GM12878 (cell line): ENCODE measurements at regions of chr14 and their contacts with region 1.

Region 1: GRCh38 chr14:19947413-19948090 is 16.8 kb downstream of the OR4K1 start:
- DNase-seq: no peak
- ATAC-seq: no peak
- H3K4me3 ChIP-seq: no peak overlapping the region
- H3K27ac ChIP-seq: no peak overlapping the region
- H3K4me1 ChIP-seq: no peaks in the 10 kb centered on the region
- H3K27me3 ChIP-seq: no peaks in the 10 kb centered on the region
- CTCF ChIP-seq: no peak
- EP300 ChIP-seq: no peak
- POLR2A ChIP-seq: no peak
- RAD21 ChIP-seq: no peak

Region 2: DNA sequence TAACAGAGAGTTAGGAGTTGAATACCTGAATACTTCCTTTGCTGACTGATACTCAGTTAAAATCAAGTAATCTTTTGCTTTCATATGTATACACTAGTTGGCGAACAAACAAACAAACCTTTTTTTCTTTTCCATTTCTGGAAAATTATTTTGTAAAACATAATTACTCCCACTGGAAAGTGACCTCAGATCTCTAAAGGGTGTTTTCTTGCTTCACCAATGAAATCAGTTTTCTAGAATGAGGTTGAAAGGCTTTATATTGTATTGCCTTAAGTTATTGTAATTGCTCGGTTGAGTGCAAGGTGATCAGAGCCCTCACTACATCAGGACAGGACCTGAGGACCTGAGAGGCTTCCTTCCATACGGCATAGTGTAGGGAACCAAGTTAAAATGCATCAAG is 16.9 kb before region 1 on chr14 and contains the start of gene OR4K1:
- CTCF ChIA-PET with region 1: no interaction called
- POLR2A ChIA-PET with region 1: no interaction called
- RAD21 ChIA-PET with region 1: no interaction called
- SMC1A ChIA-PET with region 1: no interaction called
- in situ Hi-C with region 1: no loop called
- intact Hi-C with region 1: no loop called
- DNase-seq: no peak
- ATAC-seq: no peak
- H3K4me3 ChIP-seq: no peak within 1 kb of the TSS
- H3K27ac ChIP-seq: no peak within 1 kb of the TSS
- H3K4me1 ChIP-seq: no peaks in the 10 kb centered on the region
- H3K27me3 ChIP-seq: no peaks in the 10 kb centered on the region
- CTCF ChIP-seq: no peak
- EP300 ChIP-seq: no peak
- POLR2A ChIP-seq: no peak
- RAD21 ChIP-seq: no peak
- polyA plus RNA-seq, gene OR4K1: not detected

Region 3: DNA sequence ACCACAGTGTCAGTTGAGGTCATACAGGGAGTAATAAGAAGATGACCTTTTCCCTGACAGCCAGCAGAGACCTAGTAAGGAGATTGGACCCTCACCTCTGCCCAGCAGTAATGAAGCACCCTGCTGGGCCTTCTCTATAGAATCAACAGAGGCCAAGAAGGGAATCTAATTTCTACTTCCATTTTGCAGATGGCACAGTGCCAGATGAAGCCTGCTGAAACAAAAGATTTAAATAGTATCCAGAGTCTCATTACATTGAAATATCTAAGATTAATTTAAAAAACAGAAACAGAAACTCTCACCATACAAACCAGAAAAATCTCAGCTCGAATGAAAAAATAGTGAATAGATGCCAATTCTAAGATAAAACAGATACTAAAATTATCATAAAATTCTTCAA is 59.9 kb after region 1 on chr14:
- CTCF ChIA-PET with region 1: no interaction called
- POLR2A ChIA-PET with region 1: no interaction called
- RAD21 ChIA-PET with region 1: no interaction called
- SMC1A ChIA-PET with region 1: no interaction called
- in situ Hi-C with region 1: no loop called
- intact Hi-C with region 1: loop called (anchors 5 kb)
- DNase-seq: no peak
- ATAC-seq: no peak
- H3K4me3 ChIP-seq: no peak overlapping the region
- H3K27ac ChIP-seq: no peak overlapping the region
- H3K4me1 ChIP-seq: no peaks in the 10 kb centered on the region
- H3K27me3 ChIP-seq: no peaks in the 10 kb centered on the region
- CTCF ChIP-seq: no peak
- EP300 ChIP-seq: no peak
- POLR2A ChIP-seq: no peak
- RAD21 ChIP-seq: no peak

Region 4: DNA sequence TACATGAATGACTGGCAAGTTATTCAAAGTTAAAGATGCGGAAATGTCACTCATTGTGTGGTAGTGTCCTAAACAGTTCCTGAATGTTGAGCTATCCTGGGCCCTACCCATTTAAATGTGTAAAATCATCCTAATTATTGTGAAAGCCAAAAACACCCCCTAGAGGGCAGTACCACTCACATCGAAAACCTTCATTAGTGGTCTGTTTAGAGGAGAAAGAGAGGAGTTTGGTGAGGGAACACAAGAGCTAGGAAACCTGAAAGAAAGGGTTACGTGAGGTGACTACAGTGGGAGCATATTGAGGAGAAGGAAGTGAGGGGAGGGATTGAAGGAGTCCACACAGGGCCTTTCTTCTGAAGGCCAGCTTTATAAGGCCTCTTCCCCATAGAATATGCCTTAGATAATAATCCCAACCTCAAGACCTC is 468.2 kb after region 1 on chr14:
- CTCF ChIA-PET with region 1: no interaction called
- POLR2A ChIA-PET with region 1: no interaction called
- RAD21 ChIA-PET with region 1: no interaction called
- SMC1A ChIA-PET with region 1: no interaction called
- in situ Hi-C with region 1: no loop called
- intact Hi-C with region 1: no loop called
- DNase-seq: peak; percentile 49
- ATAC-seq: peak; percentile 59
- H3K4me3 ChIP-seq: no peak overlapping the region
- H3K27ac ChIP-seq: no peak overlapping the region
- H3K4me1 ChIP-seq: peaks cover 4% of the 10 kb centered on the region
- H3K27me3 ChIP-seq: no peaks in the 10 kb centered on the region
- CTCF ChIP-seq: peak; percentile 62 to 72 (median 68)
- EP300 ChIP-seq: no peak
- POLR2A ChIP-seq: no peak
- RAD21 ChIP-seq: peak; percentile 82